ENCODE measurements at regions of chr22 and their contacts with region 1.

Region 1: GRCh38 chr22:50530877-50531545 is 1.2 kb upstream of the TYMP start:
- DNase-seq: peak; percentile 95
- ATAC-seq: peak; percentile 44
- H3K4me3 ChIP-seq: peak overlapping the region; percentile 47 to 95 (median 95)
- H3K4me3 Mint-ChIP-seq: peak overlapping the region; percentile 95
- H3K27ac ChIP-seq: peak overlapping the region; percentile 99 to 100
- H3K27ac Mint-ChIP-seq: peak overlapping the region; percentile 99
- H3K4me1 ChIP-seq: peaks cover 22 to 73% of the 10 kb centered on the region in 2 donors
- H3K4me1 Mint-ChIP-seq: peaks cover 54% of the 10 kb centered on the region
- H3K27me3 ChIP-seq: no peaks in the 10 kb centered on the region
- H3K27me3 Mint-ChIP-seq: no peaks in the 10 kb centered on the region
- CTCF ChIP-seq: no peak

Region 2: GRCh38 chr22:50190941-50191741 is 339.9 kb before region 1 on chr22:
- CTCF ChIA-PET with region 1: interaction called, 10 read pairs
- POLR2A ChIA-PET with region 1: interaction called, 6 read pairs
- intact Hi-C with region 1: loop called (anchors 1 kb)
- DNase-seq: peak; percentile 97
- ATAC-seq: peak; percentile 44
- H3K4me3 ChIP-seq: peak overlapping the region; percentile 14 to 63 (median 48)
- H3K4me3 Mint-ChIP-seq: peak overlapping the region; percentile 86
- H3K27ac ChIP-seq: peak overlapping the region; percentile 99 to 100
- H3K27ac Mint-ChIP-seq: peak overlapping the region; percentile 99
- H3K4me1 ChIP-seq: peaks cover 84 to 97% of the 10 kb centered on the region in 2 donors
- H3K4me1 Mint-ChIP-seq: peaks cover 62% of the 10 kb centered on the region
- H3K27me3 ChIP-seq: no peaks in the 10 kb centered on the region
- H3K27me3 Mint-ChIP-seq: no peaks in the 10 kb centered on the region
- CTCF ChIP-seq: no peak

Region 3: DNA sequence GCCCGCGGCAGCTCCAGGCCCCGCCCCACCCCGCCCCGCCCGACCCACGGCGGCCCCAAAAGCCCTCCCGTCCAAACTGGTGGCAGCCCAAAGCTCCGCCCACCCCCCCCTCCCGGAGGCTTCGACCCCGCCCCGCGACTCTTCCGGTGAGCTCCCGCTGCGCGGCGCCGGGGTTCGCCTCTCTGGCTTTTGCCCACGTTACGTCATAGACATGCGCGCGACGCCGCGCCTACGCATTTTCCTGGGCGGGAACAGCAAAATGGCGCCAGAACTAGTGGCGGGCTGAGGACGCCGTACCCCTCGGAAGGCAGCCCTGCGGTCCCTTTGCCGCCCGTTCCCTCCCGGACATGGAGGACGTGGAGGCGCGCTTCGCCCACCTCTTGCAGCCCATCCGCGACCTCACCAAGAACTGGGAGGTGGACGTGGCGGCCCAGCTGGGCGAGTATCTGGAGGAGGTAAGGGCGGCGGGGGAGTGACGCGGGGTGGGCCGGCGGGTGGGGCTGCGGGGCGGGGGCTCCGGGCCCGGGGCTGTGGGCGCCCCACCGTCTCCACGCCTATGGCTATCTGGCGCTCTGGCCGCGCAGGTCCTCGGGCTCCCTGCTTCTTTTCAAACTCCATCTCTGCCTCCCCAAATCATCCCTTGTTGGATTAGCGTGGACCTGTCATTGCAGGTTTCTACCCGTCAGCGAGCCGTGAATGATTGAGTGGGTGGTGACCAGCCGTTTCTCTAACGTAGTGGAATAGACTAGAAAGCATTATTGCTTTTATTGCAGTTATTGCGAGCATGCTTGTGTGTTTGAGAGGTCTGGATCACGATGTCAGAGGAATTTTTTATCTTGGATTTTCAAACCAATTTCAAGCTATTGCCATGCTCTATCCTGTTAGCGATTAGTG is 22.8 kb before region 1 on chr22 and contains the start of gene NCAPH2:
- CTCF ChIA-PET with region 1: interaction called, 71 read pairs
- POLR2A ChIA-PET with region 1: interaction called, 35 read pairs
- intact Hi-C with region 1: loop called (anchors 1 kb)
- DNase-seq: peak; percentile 98
- ATAC-seq: peak; percentile 71
- H3K4me3 ChIP-seq: peak within 1 kb of the TSS; percentile 75 to 92 (median 91)
- H3K4me3 Mint-ChIP-seq: peak within 1 kb of the TSS; percentile 95
- H3K27ac ChIP-seq: peak within 1 kb of the TSS; percentile 88 to 92
- H3K27ac Mint-ChIP-seq: peak within 1 kb of the TSS; percentile 98
- H3K4me1 ChIP-seq: peaks cover 19 to 29% of the 10 kb centered on the region in 2 donors
- H3K4me1 Mint-ChIP-seq: peaks cover 28% of the 10 kb centered on the region
- H3K27me3 ChIP-seq: no peaks in the 10 kb centered on the region
- H3K27me3 Mint-ChIP-seq: no peaks in the 10 kb centered on the region
- CTCF ChIP-seq: no peak
- total RNA-seq, gene NCAPH2: 71.5 and 76.9 TPM in 2 replicates